ENCODE measurements at regions of chr10 and their contacts with region 1.

Region 1: DNA sequence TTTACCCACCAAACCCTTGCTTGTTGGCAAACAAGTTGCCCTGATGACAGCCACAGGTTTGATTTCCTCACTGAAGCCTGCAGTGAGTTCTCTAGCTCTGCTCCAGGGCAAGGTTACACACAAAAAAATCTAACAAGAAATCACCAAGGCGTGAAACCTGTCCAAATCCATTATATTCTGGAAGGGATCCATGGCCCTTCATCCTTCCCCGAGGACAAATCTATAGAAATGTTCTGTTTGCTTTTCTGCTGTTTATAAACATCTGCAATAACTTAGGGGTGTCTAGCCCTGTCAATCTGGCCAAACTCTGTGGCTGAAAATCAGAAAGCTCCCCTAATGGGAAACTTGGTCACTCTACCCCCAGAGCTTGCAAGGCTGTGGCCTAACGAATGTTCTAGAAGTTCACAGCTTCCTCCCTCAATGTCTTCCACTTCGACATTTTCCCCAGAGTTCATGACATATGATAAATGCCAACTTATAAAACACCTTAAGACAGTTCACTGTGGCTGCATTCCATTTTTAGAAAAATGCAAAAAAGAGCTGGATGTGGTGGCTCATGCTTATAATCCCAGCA is 164.5 kb downstream of the PRPF18 start:
- DNase-seq: no peak
- H3K4me3 ChIP-seq: no peak overlapping the region
- H3K27ac ChIP-seq: no peak overlapping the region
- H3K4me1 ChIP-seq: no peaks in the 10 kb centered on the region
- H3K27me3 ChIP-seq: no peaks in the 10 kb centered on the region
- CTCF ChIP-seq: no peak
- POLR2A ChIP-seq: no peak

Region 2: DNA sequence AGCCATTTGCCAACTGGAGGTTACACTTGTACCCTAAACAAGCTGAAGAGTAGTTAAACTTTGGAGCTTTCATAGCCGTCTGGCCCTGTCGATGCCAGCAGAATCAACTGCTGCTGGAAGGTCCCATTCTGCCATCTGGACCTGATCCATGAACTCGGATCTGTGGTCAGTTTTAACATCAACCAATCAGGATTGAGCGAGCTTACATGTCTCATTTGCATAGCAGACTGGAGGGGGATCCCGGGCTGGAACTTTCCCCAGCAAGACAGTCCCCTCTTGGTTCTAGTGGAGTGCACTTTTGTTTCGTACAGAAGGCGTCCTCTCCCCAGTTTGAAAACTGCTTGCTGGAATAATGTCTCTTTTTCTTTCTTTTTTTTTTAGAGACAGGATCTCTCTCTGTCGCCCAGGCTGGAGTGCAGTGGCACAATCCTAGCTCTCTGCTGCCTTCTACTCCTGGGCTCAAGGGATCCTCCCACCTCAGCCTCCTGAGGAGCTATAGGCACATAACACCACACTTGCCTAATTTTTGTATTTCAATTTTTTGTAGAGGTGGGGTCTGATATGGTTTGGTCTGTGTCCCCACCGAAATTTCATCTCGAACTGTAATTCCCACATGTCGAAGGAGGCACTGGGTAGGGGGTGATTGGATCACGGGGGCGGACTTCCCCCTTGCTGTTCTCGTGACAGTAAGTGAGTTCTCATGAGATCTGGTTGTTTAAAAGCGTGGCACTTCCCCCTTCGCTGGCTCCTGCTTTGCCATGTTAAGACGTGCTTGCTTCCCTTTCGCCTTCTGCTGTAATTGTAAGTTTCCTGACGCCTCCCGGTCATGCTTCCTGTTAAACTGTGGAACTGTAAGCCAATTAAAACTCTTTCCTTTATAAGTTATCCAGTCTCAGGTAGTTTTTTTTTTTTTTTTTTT is 360.4 kb before region 1 on chr10:
- intact Hi-C with region 1: loop called (anchors 5 kb)
- DNase-seq: no peak
- H3K4me3 ChIP-seq: peak overlapping the region in 1 of 3 donors; percentile 25
- H3K27ac ChIP-seq: peak overlapping the region in 1 of 2 donors; percentile 25
- H3K4me1 ChIP-seq: no peaks in the 10 kb centered on the region
- H3K27me3 ChIP-seq: no peaks in the 10 kb centered on the region
- CTCF ChIP-seq: no peak
- POLR2A ChIP-seq: no peak

Measured in breast epithelium (tissue), 4 donors.